Psoas muscle (tissue), 8 donors: ENCODE measurements at regions of chr15 and their contacts with region 1.

Region 1: GRCh38 chr15:30903497-30904201 is at the start of gene FAN1:
- DNase-seq: peak; percentile 79 to 92
- ATAC-seq: peak; percentile 98 to 99 (median 98)
- H3K4me3 ChIP-seq: peak within 1 kb of the TSS; percentile 86
- H3K27ac ChIP-seq: peak within 1 kb of the TSS; percentile 89
- H3K4me1 ChIP-seq: peaks cover 27% of the 10 kb centered on the region
- H3K27me3 ChIP-seq: no peaks in the 10 kb centered on the region
- CTCF ChIP-seq: no peak
- total RNA-seq, gene FAN1: 13.5 to 27.5 (median 25.2) TPM

Region 2: GRCh38 chr15:31128919-31129768 is 225.5 kb after region 1 on chr15:
- intact Hi-C with region 1: loop called (anchors 5 kb)
- DNase-seq: peak; percentile 46 to 87
- ATAC-seq: peak; percentile 58 to 98 (median 89)
- H3K4me3 ChIP-seq: peak overlapping the region; percentile 47
- H3K27ac ChIP-seq: no peak overlapping the region
- H3K4me1 ChIP-seq: peaks cover 7% of the 10 kb centered on the region
- H3K27me3 ChIP-seq: no peaks in the 10 kb centered on the region
- CTCF ChIP-seq: peak; percentile 95